PC-3 (cell line): ENCODE measurements at regions of chr11 and their contacts with region 1.

Region 1: DNA sequence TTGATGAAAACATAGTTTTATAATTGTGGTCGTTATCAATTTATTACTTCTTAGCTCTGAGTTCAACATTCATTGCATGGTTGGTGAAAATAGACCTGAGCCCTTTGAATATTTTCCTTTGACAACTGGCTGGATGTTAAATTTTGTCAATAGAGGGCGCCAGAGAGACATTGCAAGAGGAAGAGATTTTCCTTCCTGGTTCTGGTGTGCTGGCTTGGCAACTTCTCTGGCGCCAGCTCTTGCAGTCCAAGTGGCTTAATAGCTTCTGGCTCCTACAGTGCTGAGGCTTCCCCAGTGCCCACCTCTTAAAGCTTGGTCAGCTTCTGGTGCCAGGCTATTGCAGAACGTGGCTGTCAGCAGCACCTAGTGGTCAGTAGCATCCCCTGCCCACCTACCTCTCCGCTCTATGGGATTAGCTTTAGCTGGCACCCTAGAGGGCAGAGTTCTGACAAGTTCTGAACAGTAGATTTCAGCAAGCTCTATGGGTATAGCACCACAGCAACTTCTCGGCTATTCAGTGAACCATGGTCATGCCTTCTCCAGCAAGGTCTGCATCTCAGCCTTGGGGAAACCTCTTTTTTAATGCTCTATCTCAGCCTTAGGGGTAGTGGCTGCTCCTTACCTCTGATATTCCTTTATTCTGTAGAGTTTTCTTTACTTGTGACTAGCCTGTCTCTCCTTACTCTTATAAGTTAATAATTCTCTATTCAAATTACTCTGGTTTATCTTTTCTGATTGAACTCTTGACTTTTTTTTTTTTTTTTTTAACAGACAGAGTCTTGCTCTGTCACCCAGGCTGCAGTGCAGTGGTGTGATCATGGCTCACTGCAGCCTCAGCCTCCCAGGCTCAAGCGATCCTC is 59.4 kb downstream of the ACER3 start:
- DNase-seq: peak; percentile 96
- ATAC-seq: peak; percentile 77
- H3K4me3 ChIP-seq: no peak overlapping the region
- H3K27ac ChIP-seq: no peak overlapping the region
- H3K4me1 ChIP-seq: peaks cover 20% of the 10 kb centered on the region
- H3K27me3 ChIP-seq: no peaks in the 10 kb centered on the region
- CTCF ChIP-seq: peak; percentile 99

Region 2: GRCh38 chr11:76734456-76735420 is 185.4 kb before region 1 on chr11:
- CTCF ChIA-PET with region 1: interaction called, 52 read pairs
- POLR2A ChIA-PET with region 1: no interaction called
- intact Hi-C with region 1: loop called (anchors 1 kb)
- DNase-seq: no peak
- ATAC-seq: no peak
- H3K4me3 ChIP-seq: no peak overlapping the region
- H3K27ac ChIP-seq: no peak overlapping the region
- H3K4me1 ChIP-seq: no peaks in the 10 kb centered on the region
- H3K27me3 ChIP-seq: no peaks in the 10 kb centered on the region
- CTCF ChIP-seq: no peak

Region 3: DNA sequence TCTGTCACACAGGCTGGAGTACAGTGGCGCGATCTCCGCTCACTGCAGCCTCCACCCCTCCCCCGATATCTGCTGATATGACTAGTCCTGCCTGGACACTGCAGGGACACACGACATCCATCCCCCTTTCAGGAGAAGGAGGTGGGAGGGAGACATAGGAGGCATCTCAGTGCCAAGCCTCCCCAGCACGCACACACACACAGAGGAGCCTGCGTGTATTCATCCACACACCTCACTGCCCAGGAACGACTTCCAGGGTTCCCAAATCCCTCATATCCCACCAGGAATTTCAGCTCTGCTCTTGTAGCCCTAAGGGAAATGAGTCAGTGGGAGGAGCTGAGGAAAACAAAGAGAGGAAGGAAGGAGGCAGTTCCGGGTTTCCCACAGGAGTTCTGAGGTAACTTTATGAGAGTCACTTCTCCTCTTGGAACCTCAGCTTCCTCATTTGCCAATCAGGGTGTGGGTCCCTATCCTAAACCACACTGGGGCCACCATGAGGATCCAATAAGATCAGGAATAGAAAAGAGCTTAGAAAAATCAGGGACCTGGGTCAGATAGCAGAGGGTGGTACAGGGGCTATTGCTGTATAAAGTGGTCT is 96.5 kb before region 1 on chr11:
- CTCF ChIA-PET with region 1: interaction called, 22 read pairs
- POLR2A ChIA-PET with region 1: no interaction called
- intact Hi-C with region 1: no loop called
- DNase-seq: peak; percentile 99
- ATAC-seq: peak; percentile 75
- H3K4me3 ChIP-seq: peak overlapping the region; percentile 38
- H3K27ac ChIP-seq: peak overlapping the region; percentile 96
- H3K4me1 ChIP-seq: peaks cover 37% of the 10 kb centered on the region
- H3K27me3 ChIP-seq: no peaks in the 10 kb centered on the region
- CTCF ChIP-seq: no peak

Region 4: GRCh38 chr11:76939211-76939631 is 19.1 kb after region 1 on chr11:
- CTCF ChIA-PET with region 1: interaction called, 3 read pairs
- POLR2A ChIA-PET with region 1: no interaction called
- intact Hi-C with region 1: loop called (anchors 2 kb)
- DNase-seq: peak; percentile 89
- ATAC-seq: peak; percentile 94
- H3K4me3 ChIP-seq: no peak overlapping the region
- H3K27ac ChIP-seq: peak overlapping the region; percentile 39
- H3K4me1 ChIP-seq: peaks cover 20% of the 10 kb centered on the region
- H3K27me3 ChIP-seq: no peaks in the 10 kb centered on the region
- CTCF ChIP-seq: no peak

Region 5: DNA sequence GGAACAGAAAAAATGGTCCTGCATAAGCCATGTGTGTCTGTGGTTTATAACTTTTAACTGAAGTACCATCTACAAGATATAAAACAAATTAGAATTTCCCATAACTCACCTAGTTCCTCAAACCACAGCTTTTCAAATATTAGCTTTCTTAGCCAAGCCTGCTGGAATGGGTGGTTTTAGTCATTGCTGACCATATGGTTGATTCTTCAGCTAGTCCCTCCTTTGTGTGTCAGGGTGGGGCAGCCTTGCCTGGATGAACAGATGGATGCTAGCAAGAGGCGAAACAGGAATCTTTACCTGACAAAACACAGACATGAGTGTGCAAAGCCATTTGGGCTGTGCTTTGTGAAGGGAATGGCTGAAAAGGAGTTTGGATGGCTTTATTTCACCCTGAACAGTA is 107.2 kb after region 1 on chr11:
- CTCF ChIA-PET with region 1: interaction called, 4 read pairs
- POLR2A ChIA-PET with region 1: no interaction called
- intact Hi-C with region 1: loop called (anchors 5 kb)
- DNase-seq: peak; percentile 98
- ATAC-seq: peak; percentile 96
- H3K4me3 ChIP-seq: no peak overlapping the region
- H3K27ac ChIP-seq: peak overlapping the region; percentile 93
- H3K4me1 ChIP-seq: peaks cover 35% of the 10 kb centered on the region
- H3K27me3 ChIP-seq: no peaks in the 10 kb centered on the region
- CTCF ChIP-seq: no peak

Region 6: DNA sequence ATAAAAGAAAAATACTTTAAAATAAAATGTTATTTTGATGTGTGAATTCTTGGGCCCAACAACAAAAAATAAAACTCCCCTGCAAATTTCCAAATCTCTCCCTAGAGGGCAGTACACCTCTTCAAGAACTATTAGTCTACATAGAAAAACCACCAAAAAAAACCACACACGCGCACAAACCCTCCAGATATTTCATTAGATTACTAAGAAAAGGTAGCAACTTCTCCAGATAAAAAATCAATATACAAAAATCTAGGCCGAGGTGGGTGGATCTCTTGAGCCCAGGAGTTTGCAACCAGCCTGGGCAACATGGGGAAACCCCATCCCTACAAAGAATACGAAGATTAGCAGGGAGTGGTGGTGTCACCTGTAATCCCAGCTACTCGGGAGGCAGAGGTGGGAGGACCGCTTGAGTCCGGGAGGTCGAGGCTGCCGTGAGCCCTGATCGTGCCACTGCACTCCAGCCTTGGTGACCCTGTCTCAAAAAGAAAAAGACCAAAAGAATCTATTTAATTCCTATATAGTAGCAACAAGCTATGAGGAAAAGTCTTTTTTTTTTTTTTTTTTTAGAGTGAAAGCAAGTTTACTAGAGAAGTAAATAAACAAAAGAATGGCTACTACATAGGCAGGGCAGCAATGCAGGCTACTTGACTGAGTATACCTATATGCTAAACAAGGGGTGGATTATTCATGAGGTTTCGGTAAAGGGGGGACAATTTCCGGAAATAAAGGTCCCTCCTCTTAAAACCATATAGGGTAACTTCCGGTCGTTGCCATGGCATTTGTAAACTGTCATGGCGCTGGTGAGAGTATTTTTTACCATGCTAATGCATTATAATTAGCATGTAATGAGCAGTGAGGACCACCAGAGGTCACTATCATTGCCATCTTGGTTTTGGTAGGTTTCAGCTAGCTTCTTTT is 127.2 kb after region 1 on chr11:
- CTCF ChIA-PET with region 1: interaction called, 24 read pairs
- POLR2A ChIA-PET with region 1: no interaction called
- intact Hi-C with region 1: loop called (anchors 1 kb)
- DNase-seq: peak; percentile 99
- ATAC-seq: peak; percentile 82
- H3K4me3 ChIP-seq: peak overlapping the region; percentile 71
- H3K27ac ChIP-seq: no peak overlapping the region
- H3K4me1 ChIP-seq: peaks cover 16% of the 10 kb centered on the region; the same call in 1 of the 2 replicates
- H3K27me3 ChIP-seq: no peaks in the 10 kb centered on the region
- CTCF ChIP-seq: peak; percentile 76